ENCODE measurements at regions of chr15 and their contacts with region 1.

Region 1: DNA sequence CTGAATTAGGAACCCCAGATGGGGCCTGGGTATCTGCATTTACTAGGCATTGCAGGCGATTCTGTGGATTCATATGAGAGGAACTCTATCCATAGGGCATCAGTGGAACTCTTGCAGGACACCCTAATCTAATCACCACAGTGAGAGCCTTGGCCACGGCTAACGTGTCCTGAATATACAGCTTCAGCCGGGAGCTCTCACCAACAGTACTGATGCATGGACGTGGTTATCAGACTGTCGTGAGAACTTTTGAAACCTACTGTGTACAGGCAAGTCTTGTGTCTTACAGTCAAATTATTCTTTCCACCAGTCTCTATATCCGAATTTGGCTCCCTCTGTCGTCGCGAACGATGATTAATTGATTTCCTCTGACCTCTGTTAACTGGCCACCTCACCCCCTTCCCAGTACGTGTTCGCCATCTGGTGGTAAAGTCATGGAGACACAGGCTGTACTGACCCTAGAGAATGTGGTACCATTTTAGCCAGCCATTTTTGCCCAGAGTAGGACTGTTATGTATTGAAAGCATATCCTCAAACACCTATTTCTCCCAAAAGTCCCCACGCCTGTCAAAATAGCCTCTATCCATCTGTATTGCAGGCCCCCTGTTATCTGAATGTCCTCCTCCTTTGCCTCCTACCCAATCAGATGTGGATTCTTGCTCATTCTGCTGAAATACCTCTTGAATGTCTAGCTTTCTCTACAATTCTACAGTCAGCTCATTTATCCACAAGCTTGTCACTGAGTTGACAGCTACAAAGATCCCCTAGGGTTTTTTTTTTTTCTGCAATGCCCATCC is 39.7 kb downstream of the GLDN start:
- DNase-seq: no peak
- H3K4me3 ChIP-seq: peak overlapping the region in 1 of 4 donors; percentile 12
- H3K27ac ChIP-seq: no peak overlapping the region
- H3K4me1 ChIP-seq: peaks cover 0 to 25% (median 7%) of the 10 kb centered on the region in 3 donors
- H3K27me3 ChIP-seq: peaks cover 0 to 18% (median 0%) of the 10 kb centered on the region in 4 donors
- CTCF ChIP-seq: peak; percentile 53 to 87 (median 82)
- POLR2A ChIP-seq: no peak

Region 2: DNA sequence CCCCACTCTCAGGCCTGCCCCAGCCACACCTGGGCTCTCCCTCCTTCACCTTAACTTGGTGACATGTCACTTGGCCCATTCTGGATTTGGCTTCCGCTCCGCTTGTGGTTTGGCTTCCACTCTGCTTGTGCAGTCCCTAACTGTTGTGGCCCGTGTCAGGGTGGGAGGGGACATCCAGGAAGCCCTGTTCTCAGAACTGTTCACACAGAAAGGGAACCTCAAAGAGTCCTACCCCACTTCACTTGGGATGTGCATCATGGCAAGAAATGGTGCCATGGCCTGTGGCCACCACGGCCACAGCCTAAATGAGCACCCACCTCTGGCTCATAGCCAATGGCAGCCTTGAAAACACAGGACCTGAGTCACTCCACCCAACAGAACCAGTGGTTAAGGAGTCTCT is 106.3 kb before region 1 on chr15:
- intact Hi-C with region 1: loop called (anchors 5 kb)
- DNase-seq: no peak
- H3K4me3 ChIP-seq: no peak overlapping the region
- H3K27ac ChIP-seq: no peak overlapping the region
- H3K4me1 ChIP-seq: no peaks in the 10 kb centered on the region
- H3K27me3 ChIP-seq: peaks cover 0 to 56% (median 0%) of the 10 kb centered on the region in 4 donors
- CTCF ChIP-seq: no peak
- POLR2A ChIP-seq: no peak

Region 3: DNA sequence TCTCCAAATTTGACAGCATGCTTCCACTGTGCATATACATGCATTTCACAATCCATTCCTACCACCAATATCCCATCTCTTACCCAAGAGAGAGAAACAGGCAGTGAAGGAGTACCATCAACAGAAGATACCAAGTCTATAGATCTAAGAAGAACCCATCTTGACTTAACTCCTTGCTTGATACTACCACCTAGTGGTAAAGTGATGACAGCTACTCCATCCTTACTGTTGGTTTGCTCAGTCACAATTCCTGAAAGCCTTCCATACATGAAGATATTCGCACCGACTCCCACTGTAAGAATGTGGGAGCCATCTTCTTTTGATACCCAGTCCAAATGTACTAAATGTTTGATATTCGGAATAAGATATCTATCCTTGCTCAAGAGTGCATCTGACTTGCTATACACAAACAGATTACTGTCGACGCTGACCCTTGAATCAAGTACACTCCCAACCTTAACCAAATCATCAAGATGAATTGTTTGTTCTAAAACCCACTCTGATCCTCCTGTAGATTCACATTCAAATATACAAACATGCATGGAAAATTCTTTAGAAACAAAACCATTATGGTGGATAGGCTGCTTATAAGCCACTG is 118.3 kb after region 1 on chr15:
- intact Hi-C with region 1: no loop called
- DNase-seq: no peak
- H3K4me3 ChIP-seq: no peak overlapping the region
- H3K27ac ChIP-seq: no peak overlapping the region
- H3K4me1 ChIP-seq: no peaks in the 10 kb centered on the region
- H3K27me3 ChIP-seq: no peaks in the 10 kb centered on the region
- CTCF ChIP-seq: peak in 3 of 6 experiments; percentile 26 to 54 (median 31)
- POLR2A ChIP-seq: no peak

Region 4: GRCh38 chr15:51524376-51524775 is 143.2 kb after region 1 on chr15:
- intact Hi-C with region 1: no loop called
- DNase-seq: no peak
- H3K4me3 ChIP-seq: no peak overlapping the region
- H3K27ac ChIP-seq: no peak overlapping the region
- H3K4me1 ChIP-seq: no peaks in the 10 kb centered on the region
- H3K27me3 ChIP-seq: no peaks in the 10 kb centered on the region
- CTCF ChIP-seq: no peak
- POLR2A ChIP-seq: no peak